K562 (cell line): ENCODE measurements at regions of chr7 and their contacts with region 1.

Region 1: DNA sequence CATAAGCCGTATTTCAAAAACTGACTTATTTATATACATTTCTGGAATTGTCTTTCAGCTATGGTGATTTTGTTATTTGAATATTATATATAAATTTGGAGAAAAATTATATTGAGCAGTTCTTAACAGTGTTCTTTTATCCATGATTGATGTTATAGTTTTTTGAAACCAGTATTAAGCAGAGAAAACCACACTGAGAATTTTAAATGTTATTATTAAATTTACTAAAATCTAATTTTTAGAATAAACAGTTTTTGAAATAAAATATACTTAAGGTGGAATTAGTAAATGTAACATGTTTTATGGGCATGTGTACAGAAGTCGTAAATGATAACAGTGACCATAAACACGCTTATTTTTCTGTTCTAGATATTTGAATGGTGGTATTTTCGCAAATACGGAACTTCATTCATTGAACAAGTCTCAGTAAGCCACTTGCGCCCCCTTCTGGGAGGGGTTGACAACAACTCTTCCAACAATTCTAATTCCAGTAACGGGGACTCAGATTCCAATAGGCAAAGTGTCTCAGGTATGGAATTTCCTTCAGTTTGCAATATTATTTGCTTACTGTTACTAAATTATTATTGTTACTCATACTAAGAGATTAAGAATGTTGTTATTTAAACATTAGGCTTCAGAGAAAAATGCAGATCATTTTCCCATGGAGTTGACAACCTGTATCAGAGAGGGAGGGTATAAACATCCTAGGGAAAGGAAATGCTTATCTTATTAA is 166.1 kb downstream of the ST7 start:
- DNase-seq: peak; percentile 60 to 94 (median 66)
- ATAC-seq: peak; percentile 82
- H3K4me3 ChIP-seq: no peak overlapping the region
- H3K27ac ChIP-seq: no peak overlapping the region
- H3K4me1 ChIP-seq: peaks cover 0 to 8% of the 10 kb centered on the region in 2 experiments; a peak in 3 of 5 replicates
- H3K27me3 ChIP-seq: no peaks in the 10 kb centered on the region
- CTCF ChIP-seq: peak; percentile 90 to 98 (median 92)
- EP300 ChIP-seq: 0 out of 2 replicates have a peak, but pooled peaks have one; percentile 2
- POLR2A ChIP-seq: no peak
- RAD21 ChIP-seq: peak; percentile 99

Region 2: DNA sequence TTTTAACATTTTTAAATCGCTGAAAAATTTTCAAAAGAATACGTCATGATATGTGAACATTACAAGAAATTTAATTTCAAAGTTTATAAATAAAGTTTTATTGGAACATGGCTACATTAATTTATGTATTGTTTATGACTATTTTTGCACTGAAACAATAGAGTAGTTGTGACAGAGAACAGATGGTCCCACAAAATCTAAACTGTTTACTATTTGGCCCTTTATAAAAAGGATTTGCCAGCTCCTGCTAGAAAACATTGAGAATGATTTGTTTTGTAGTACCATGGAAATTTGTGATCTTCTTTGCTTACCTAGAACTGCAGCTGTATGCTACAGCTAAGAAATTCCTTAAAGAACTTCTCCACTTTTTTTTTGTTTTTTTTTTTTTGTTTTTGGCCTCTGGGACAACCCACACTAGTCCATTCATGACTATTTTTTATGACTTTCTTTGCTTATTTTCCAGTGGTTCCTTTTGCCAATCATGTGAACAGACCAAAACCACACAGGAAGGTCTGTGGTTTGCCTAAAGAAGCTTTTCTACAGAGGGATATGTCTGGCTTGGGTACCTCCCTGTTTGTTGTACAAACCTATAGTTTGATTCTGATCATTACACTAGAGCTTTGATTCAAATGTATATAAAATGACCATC is 110.4 kb before region 1 on chr7:
- CTCF ChIA-PET with region 1: interaction called, 4 read pairs
- POLR2A ChIA-PET with region 1: no interaction called
- in situ Hi-C with region 1: loop called (anchors 10 kb)
- intact Hi-C with region 1: loop called (anchors 5 kb)
- DNase-seq: no peak
- ATAC-seq: no peak
- H3K4me3 ChIP-seq: no peak overlapping the region
- H3K27ac ChIP-seq: no peak overlapping the region
- H3K4me1 ChIP-seq: peaks cover 7 to 51% of the 10 kb centered on the region in 2 experiments
- H3K27me3 ChIP-seq: no peaks in the 10 kb centered on the region
- CTCF ChIP-seq: no peak
- EP300 ChIP-seq: no peak
- POLR2A ChIP-seq: no peak
- RAD21 ChIP-seq: no peak